ENCODE measurements at regions of chr16 and their contacts with region 1.

Region 1: DNA sequence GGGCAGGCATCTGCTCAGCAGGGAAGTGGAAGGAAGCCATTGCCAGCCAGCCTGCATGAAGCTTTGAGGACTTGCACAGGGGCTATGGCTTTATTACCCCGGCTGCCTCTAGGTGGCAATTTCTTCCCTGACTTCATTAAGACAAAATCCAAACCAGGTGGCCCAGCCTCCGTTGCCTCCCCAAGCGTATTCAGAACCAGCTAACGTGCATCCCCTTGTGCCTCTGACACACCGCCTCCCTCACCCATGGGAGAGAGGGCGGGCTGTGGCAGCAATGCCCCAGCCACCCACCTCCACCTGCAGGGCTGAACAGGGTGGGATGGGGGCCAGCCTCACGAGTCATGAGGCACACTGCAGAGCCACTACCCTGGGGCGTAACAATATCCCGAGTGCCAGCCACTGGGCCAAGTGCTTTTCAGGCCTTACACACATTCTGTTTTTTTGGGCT is 6.8 kb downstream of the KIFC3 start:
- DNase-seq: peak; percentile 51

Region 2: DNA sequence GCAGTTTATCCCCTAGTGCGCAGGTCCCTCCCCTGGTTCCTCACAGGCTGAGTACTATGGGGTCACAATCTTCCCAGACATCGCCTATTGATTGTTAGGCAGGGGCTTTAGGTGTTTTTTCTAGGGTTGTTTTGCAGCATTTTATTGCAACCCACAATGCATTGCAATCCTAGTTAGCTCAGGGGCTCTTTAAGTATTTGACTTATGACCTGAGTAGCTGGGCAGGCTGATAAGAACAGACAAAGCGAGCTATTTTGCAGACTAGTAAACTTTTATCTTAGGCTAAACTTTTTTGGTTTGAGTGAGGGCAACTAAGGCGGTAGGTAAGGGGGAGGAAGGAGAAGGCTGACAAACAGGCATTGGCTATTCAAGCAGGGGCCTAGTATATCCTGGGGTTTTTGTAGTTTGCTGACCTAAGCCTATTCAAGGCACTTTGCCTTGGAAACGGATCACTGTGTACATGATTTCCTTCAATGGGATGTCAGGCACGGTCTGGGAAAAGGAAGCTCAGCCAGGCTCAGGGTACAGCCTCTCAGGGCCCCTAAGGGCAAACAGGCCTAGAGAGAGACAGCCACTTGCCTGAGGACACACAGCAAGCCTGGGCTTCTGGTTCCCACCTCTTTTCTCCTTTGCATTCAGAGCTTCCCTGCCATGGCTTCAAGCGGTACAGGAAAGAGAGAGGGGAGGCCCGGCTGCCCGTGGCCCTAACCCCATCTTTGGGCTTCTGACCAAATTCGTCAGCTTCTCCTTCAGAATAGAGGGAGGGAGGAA is 94.5 kb before region 1 on chr16:
- in situ Hi-C with region 1: no loop called
- DNase-seq: no peak

Region 3: GRCh38 chr16:57757326-57757786 is 38.1 kb before region 1 on chr16:
- in situ Hi-C with region 1: loop called (anchors 5 kb)
- DNase-seq: peak; percentile 71

Region 4: DNA sequence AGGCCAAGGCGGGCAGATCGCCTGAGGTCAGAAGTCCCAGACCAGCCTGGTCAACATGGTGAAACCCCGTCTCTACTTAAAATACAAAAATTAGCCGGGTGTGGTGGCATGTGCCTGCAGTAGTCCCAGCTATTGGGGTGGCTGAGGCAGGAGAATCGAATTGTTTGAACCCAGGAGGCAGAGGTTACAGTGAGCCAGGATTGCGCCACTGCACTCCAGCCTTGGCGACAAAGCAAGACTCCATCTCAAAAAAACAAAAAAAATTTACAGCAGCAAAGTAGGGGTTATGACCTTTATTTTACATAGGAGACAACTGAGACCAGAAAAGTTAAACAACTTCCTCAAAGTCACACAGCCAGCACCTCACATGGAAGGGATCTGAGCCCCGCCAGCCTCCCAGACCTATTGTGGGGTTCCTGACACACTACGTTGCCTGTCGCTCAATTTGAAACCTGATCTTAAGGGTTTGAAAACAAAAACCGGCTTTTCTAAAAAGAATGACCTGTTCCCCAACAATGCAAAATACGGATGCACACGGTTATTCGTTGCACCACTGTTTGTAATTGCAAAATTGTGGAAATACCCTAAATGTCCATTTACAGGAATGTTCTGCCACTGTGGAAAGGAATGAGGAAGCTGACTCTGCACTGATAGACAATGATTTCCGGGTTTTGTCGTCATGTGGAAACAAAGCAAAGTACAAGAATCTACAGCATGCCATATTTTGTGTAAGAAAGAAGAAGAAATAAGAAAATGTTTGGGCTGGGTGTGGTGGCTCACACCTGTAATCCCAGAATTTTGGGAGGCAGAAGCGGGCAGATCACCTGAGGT is 98.3 kb after region 1 on chr16:
- in situ Hi-C with region 1: no loop called
- DNase-seq: no peak

Region 5: GRCh38 chr16:57938936-57939871 is 143.7 kb after region 1 on chr16:
- in situ Hi-C with region 1: no loop called
- DNase-seq: peak; percentile 2

Measured in G401 (cell line).